HepG2 (cell line): ENCODE measurements at regions of chr3 and their contacts with region 1.

Region 1: GRCh38 chr3:181278468-181279238 is 289.1 kb upstream of the DNAJC19 start:
- DNase-seq: no peak
- ATAC-seq: no peak
- H3K4me3 ChIP-seq: no peak overlapping the region
- H3K27ac ChIP-seq: no peak overlapping the region
- H3K4me1 ChIP-seq: no peaks in the 10 kb centered on the region
- H3K27me3 ChIP-seq: no peaks in the 10 kb centered on the region; a peak in 1 of 5 replicates
- CTCF ChIP-seq: peak; percentile 33; the same call in 1 of the 2 replicates
- EP300 ChIP-seq: no peak
- POLR2A ChIP-seq: no peak
- RAD21 ChIP-seq: no peak

Region 2: GRCh38 chr3:181210275-181210674 is 68.4 kb before region 1 on chr3:
- CTCF ChIA-PET with region 1: no interaction called
- POLR2A ChIA-PET with region 1: no interaction called
- in situ Hi-C with region 1: no loop called
- intact Hi-C with region 1: loop called (anchors 2 kb)
- DNase-seq: peak; percentile 4
- ATAC-seq: no peak
- H3K4me3 ChIP-seq: no peak overlapping the region
- H3K27ac ChIP-seq: no peak overlapping the region
- H3K4me1 ChIP-seq: no peaks in the 10 kb centered on the region
- H3K27me3 ChIP-seq: no peaks in the 10 kb centered on the region
- CTCF ChIP-seq: no peak
- EP300 ChIP-seq: no peak
- POLR2A ChIP-seq: no peak
- RAD21 ChIP-seq: no peak